Activated B cell treated with CpG ODN at 0.5 μM for 24 hours (primary cell): ENCODE measurements at regions of chr12 and their contacts with region 1.

Region 1: GRCh38 chr12:1117970-1118563 is 127.0 kb downstream of the ERC1 start:
- DNase-seq: peak; percentile 40
- ATAC-seq: peak; percentile 81
- H3K4me3 Mint-ChIP-seq: no peak overlapping the region
- H3K27ac Mint-ChIP-seq: no peak overlapping the region
- H3K4me1 Mint-ChIP-seq: peaks cover 2% of the 10 kb centered on the region
- H3K27me3 Mint-ChIP-seq: no peaks in the 10 kb centered on the region
- CTCF ChIP-seq: peak; percentile 42

Region 2: GRCh38 chr12:926641-927040 is 191.4 kb before region 1 on chr12:
- CTCF ChIA-PET with region 1: no interaction called
- POLR2A ChIA-PET with region 1: no interaction called
- intact Hi-C with region 1: no loop called
- DNase-seq: no peak
- ATAC-seq: no peak
- H3K4me3 Mint-ChIP-seq: no peak overlapping the region
- H3K27ac Mint-ChIP-seq: no peak overlapping the region
- H3K4me1 Mint-ChIP-seq: no peaks in the 10 kb centered on the region
- H3K27me3 Mint-ChIP-seq: no peaks in the 10 kb centered on the region
- CTCF ChIP-seq: no peak

Region 3: DNA sequence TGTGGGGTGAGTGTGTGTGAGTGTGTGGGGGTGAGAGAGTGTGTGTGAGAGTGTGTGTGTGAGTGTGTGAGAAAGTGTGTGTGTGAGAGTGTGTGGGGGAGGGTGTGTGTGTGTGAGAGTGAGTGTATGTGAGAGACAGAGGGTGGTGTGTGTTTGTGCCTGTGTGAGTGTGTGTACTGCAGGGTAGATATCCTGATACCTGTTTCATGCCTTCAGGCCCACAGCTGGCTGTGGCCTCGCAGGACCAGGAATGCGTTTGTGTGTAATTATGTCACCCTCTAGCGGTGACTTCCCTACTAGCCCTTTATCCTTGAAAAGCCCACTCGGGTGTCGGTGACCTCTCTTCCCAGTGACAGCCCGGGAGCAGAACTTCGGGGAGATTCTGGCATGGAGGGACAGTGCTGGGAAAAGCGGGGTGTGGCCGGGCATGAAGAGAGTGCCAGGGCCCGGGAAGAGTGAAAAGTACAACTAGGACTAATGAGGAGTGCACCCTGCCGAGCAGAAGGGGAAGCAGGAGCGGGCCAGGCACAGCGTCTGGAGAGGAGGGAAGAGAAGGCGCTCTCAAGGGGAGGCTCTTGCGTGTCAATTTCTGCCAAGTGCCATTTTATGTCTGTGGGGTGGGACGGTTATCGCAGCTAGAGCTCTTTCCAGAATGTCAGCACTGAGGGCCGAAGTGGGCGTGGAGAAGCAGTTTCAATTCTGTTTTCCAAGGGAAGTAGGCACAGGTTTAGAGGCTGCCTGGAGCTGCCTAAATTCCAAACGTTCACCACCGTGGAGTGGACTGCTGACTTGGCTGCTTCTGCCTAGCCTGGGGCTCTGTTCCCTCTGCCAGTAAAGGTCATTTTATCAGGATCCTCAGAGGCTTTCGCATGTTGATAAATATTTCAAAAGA is 487.3 kb after region 1 on chr12:
- CTCF ChIA-PET with region 1: interaction called, 53 read pairs
- POLR2A ChIA-PET with region 1: interaction called, 5 read pairs
- intact Hi-C with region 1: loop called (anchors 1 kb)
- DNase-seq: peak; percentile 31
- ATAC-seq: peak; percentile 55
- H3K4me3 Mint-ChIP-seq: peak overlapping the region; percentile 91
- H3K27ac Mint-ChIP-seq: peak overlapping the region; percentile 78
- H3K4me1 Mint-ChIP-seq: peaks cover 44% of the 10 kb centered on the region
- H3K27me3 Mint-ChIP-seq: no peaks in the 10 kb centered on the region
- CTCF ChIP-seq: no peak

Region 4: DNA sequence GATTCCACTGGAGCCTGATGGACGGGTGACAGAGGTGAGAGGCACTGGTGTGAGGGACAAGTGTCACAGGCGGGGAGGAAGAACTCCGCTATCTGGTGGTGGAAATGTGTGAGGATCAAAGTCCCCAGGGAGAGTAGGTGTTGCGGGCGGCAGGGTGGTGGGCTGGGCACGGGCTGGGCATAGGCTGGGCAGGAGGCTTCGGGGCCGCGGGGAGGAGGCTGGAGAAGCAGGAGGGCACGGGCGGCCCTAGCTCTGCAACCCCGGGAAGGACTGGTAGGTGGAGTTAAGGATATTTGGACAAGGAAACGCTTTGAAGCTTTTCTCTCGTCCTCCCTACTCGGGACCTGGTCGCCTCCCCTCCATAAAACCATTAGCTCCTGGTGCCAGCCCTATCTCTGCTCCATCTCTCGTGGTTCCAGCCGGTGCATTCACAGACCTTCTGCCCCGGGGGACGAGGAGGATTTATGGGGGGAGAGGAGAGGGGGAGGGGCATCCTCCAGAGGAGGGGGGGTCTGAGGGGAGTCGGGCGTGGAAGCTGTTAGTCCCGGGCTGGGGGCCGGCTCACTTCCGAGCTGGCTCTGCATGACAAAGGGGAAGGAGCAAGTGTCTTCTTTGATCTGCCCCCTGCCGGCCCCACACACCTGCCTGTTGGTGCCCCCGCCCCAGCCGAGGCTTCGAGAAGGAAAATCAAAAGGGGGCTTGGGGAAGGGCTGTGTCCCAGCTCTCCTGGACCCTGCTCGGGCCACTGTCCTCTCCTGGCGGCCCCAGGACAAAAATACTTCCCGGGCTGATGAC is 511.5 kb after region 1 on chr12:
- CTCF ChIA-PET with region 1: interaction called, 24 read pairs
- POLR2A ChIA-PET with region 1: no interaction called
- intact Hi-C with region 1: loop called (anchors 1 kb)
- DNase-seq: peak; percentile 32
- ATAC-seq: peak; percentile 65
- H3K4me3 Mint-ChIP-seq: peak overlapping the region; percentile 76
- H3K27ac Mint-ChIP-seq: no peak overlapping the region
- H3K4me1 Mint-ChIP-seq: peaks cover 24% of the 10 kb centered on the region
- H3K27me3 Mint-ChIP-seq: peaks cover 30% of the 10 kb centered on the region
- CTCF ChIP-seq: no peak